IMR-90 (cell line): ENCODE measurements at regions of chr15 and their contacts with region 1.

Region 1: GRCh38 chr15:44308415-44308814 is 19.9 kb downstream of the GOLM2 start:
- DNase-seq: no peak
- ATAC-seq: no peak
- H3K4me3 ChIP-seq: no peak overlapping the region
- H3K27ac ChIP-seq: no peak overlapping the region
- H3K4me1 ChIP-seq: no peaks in the 10 kb centered on the region
- H3K27me3 ChIP-seq: no peaks in the 10 kb centered on the region
- CTCF ChIP-seq: no peak
- POLR2A ChIP-seq: no peak
- RAD21 ChIP-seq: no peak

Region 2: DNA sequence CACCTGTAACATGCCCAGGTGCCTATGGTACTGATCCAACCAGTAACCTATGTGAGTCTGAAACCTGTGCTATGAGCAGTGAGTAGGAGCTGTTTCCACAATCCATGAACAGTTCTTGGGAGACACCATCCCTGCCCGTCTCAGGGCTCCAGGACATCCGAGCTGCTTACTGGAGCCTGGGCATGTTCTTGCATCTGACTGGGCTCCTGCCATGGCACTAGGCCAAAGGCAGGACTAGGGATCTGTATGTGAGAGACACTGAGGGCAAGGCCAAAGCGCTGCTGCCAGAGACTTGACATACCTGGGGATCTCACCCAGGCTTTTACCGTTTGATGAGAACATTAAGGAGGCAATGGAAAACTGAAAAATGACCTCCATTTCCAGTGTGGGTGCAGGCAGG is 421.9 kb before region 1 on chr15:
- CTCF ChIA-PET with region 1: no interaction called
- POLR2A ChIA-PET with region 1: no interaction called
- dilution Hi-C with region 1: no loop called
- in situ Hi-C with region 1: no loop called
- intact Hi-C with region 1: no loop called
- DNase-seq: no peak
- ATAC-seq: no peak
- H3K4me3 ChIP-seq: no peak overlapping the region
- H3K27ac ChIP-seq: no peak overlapping the region
- H3K4me1 ChIP-seq: no peaks in the 10 kb centered on the region
- H3K27me3 ChIP-seq: no peaks in the 10 kb centered on the region
- CTCF ChIP-seq: no peak
- POLR2A ChIP-seq: no peak
- RAD21 ChIP-seq: no peak

Region 3: DNA sequence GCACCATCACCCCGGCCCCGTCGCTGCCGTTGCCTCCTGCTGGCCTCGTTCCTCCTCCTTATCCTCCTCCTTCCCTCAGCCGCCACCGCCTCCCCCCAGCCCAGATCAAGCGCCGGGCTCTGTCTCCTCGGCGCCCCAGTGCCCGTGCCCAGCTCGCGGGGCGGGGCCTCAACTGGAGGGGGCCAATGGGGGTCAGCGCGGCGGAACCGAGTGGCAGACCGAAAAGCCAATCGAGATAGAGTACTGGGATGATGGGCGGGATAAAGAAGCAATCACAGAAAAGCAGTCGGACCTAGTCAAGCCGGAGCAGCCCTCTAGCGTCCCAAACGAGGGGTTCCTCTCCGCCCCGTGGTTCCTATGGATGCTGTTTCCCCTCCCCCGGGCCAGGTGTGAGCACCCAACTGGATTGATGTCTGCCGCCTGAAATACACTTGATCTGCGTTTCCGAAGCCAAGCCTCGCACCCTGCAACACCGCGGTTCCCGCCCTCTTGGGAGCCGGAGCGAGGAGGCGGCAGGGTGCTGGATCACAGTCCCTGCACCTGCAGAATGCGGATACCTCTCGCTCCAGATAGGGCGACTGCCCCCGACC is 113.2 kb before region 1 on chr15 and contains the start of gene FRMD5:
- CTCF ChIA-PET with region 1: no interaction called
- POLR2A ChIA-PET with region 1: no interaction called
- dilution Hi-C with region 1: no loop called
- in situ Hi-C with region 1: no loop called
- intact Hi-C with region 1: no loop called
- DNase-seq: peak; percentile 95
- ATAC-seq: peak; percentile 99
- H3K4me3 ChIP-seq: peak within 1 kb of the TSS; percentile 70
- H3K27ac ChIP-seq: no peak within 1 kb of the TSS; the same call in 1 of the 2 replicates
- H3K4me1 ChIP-seq: no peaks in the 10 kb centered on the region; the same call in 1 of the 2 replicates
- H3K27me3 ChIP-seq: no peaks in the 10 kb centered on the region
- CTCF ChIP-seq: peak; percentile 52
- POLR2A ChIP-seq: no peak
- RAD21 ChIP-seq: peak; percentile 14; the same call in 1 of the 2 replicates
- total RNA-seq, gene FRMD5: 5.4 and 5.6 TPM in 2 replicates

Region 4: DNA sequence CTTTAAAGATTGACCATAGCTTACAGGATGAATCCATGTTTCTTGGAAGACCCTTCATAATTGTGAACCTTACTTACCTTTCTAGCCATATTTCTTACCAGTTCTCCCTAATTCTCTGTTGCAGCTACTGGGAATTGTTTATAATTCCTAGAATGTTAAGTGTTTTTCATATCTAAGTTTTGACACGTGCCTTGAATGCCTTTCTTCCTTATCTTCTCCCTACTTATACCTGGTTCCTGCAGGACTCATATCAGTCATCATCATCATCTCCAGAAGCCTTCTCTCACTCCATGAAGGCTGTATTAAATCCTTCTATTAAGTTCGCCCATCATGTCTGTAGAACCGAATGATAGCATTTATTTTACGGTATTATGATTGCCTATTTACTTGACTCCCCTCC is 10.3 kb after region 1 on chr15:
- CTCF ChIA-PET with region 1: interaction called, 3 read pairs
- POLR2A ChIA-PET with region 1: interaction called, 11 read pairs
- dilution Hi-C with region 1: no loop called
- in situ Hi-C with region 1: no loop called
- intact Hi-C with region 1: no loop called
- DNase-seq: no peak
- ATAC-seq: no peak
- H3K4me3 ChIP-seq: no peak overlapping the region
- H3K27ac ChIP-seq: no peak overlapping the region
- H3K4me1 ChIP-seq: no peaks in the 10 kb centered on the region
- H3K27me3 ChIP-seq: no peaks in the 10 kb centered on the region
- CTCF ChIP-seq: no peak
- POLR2A ChIP-seq: no peak
- RAD21 ChIP-seq: no peak

Region 5: GRCh38 chr15:44458429-44458828 is 150.0 kb after region 1 on chr15:
- CTCF ChIA-PET with region 1: no interaction called
- POLR2A ChIA-PET with region 1: no interaction called
- dilution Hi-C with region 1: no loop called
- in situ Hi-C with region 1: no loop called
- intact Hi-C with region 1: no loop called
- DNase-seq: no peak
- ATAC-seq: no peak
- H3K4me3 ChIP-seq: no peak overlapping the region
- H3K27ac ChIP-seq: no peak overlapping the region
- H3K4me1 ChIP-seq: no peaks in the 10 kb centered on the region
- H3K27me3 ChIP-seq: no peaks in the 10 kb centered on the region
- CTCF ChIP-seq: no peak
- POLR2A ChIP-seq: no peak
- RAD21 ChIP-seq: no peak